Kidney (tissue), 22 donors: ENCODE measurements at regions of chr2 and their contacts with region 1.

Region 1: DNA sequence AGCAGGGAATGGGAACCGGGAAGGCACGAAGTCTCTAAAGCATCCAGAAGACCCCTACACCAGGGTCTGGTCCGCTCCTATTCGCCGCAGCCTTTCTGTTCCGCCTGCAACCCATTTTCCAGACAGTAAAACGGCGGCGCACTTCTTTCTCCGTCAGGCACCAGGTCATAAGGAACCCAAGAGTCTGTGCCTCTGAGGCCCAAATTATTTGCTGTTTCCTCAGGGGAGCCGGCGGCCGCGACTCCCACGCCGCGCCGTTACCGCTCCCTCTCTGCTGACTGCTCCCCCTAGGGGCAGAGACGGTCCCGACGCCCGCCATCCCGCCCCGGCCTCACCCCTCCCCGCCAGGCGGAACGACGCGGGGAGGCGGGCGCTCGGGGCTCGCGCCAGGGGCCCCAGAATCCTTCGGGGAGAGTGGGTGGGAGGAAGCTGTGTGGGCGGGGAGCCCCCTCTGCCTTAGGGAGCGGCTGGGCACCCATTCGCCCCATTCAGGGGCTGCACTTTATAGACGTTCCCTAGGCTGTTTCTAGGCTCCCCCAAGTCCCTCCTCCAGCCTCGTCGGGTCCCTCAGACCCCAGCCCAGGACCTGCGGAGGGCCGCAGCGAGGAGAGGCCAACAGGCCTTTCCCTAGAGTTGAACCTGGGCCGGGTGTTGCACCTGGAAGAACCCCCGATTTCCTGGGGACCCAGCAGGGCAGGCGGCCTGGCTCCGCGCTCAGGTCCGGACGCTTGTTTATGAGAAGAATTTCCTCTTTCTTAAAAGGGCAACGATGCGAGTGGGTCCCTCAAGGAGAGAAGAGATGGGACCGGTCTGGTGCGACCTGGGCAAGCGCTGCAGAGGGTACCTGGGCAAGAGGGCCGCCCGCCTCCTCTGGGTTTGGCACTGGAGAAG is 3.6 kb upstream of the CTDSP1 start:
- DNase-seq: peak; percentile 97 to 99 (median 98)
- H3K4me3 ChIP-seq: peak overlapping the region; percentile 79 to 97 (median 89)
- H3K27ac ChIP-seq: peak overlapping the region; percentile 99
- H3K4me1 ChIP-seq: peaks cover 0 to 14% (median 7%) of the 10 kb centered on the region in 3 donors
- H3K27me3 ChIP-seq: no peaks in the 10 kb centered on the region
- CTCF ChIP-seq: peak; percentile 78

Region 2: GRCh38 chr2:218257390-218257981 is 138.6 kb before region 1 on chr2:
- intact Hi-C with region 1: no loop called
- DNase-seq: peak in 1 of 5 donors; percentile 61
- H3K4me3 ChIP-seq: peak overlapping the region in 1 of 3 donors; percentile 60
- H3K27ac ChIP-seq: no peak overlapping the region
- H3K4me1 ChIP-seq: peaks cover 0 to 28% (median 15%) of the 10 kb centered on the region in 3 donors
- H3K27me3 ChIP-seq: no peaks in the 10 kb centered on the region
- CTCF ChIP-seq: peak; percentile 50

Region 3: DNA sequence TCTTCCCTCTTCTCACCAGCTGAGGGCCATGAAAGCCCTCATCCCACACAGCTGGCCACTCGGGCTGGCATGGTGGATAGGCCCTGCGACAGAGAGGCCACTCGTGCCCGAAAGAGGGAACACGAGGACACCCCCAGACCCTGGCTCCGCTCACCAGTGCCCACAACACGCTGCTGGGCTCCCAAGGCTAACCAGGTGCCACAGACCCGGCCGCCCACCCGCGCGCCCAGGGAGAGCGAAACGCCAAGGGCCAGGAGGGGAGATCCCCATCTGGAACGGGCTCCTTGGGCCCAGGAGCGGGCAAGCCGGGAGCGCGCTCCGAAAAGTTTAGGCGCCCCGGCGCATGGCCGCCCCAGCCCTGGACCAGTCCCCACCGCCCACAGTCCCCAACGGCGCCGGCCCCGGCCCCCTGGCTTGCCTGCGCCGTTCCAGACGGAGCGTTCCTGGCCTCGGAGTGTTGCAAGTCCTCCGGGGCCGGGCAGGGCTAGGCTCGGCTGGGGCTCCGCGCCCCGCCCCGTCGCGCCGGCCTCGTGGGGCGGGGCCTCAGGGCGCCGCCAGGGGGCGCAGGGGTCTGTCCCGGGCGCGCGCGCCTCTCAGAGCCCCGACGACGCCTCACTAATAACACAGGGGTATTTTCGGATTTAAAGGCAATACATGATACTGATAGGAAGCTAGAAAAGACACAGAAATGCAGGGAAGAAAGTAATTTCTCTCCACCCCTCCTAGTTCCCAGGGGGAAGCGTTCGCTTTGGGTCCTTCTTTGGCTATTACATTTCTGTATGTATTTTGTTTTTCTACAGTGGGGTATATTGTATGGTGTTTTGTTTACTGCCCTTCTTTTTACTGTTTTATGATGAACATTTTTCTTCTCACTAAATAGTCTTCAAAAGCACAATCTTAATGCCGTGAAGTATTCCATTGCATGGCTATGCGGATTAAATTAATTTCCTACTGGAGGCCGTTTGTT is 103.7 kb before region 1 on chr2 and contains the start of gene TMBIM1:
- intact Hi-C with region 1: loop called (anchors 10 kb)
- DNase-seq: peak; percentile 82 to 94 (median 86)
- H3K4me3 ChIP-seq: peak within 1 kb of the TSS; percentile 66 to 86 (median 73)
- H3K27ac ChIP-seq: peak within 1 kb of the TSS; percentile 98
- H3K4me1 ChIP-seq: peaks cover 9 to 43% (median 40%) of the 10 kb centered on the region in 3 donors
- H3K27me3 ChIP-seq: no peaks in the 10 kb centered on the region
- CTCF ChIP-seq: peak; percentile 67
- total RNA-seq, gene TMBIM1: 217 TPM

Region 4: GRCh38 chr2:218466016-218466521 is 70.0 kb after region 1 on chr2:
- intact Hi-C with region 1: no loop called
- DNase-seq: peak in 2 of 5 donors; percentile 31 to 52
- H3K4me3 ChIP-seq: no peak overlapping the region
- H3K27ac ChIP-seq: no peak overlapping the region
- H3K4me1 ChIP-seq: no peaks in the 10 kb centered on the region
- H3K27me3 ChIP-seq: no peaks in the 10 kb centered on the region
- CTCF ChIP-seq: peak; percentile 48

Region 5: GRCh38 chr2:218518876-218519275 is 122.8 kb after region 1 on chr2:
- intact Hi-C with region 1: no loop called
- DNase-seq: no peak
- H3K4me3 ChIP-seq: no peak overlapping the region
- H3K27ac ChIP-seq: no peak overlapping the region
- H3K4me1 ChIP-seq: no peaks in the 10 kb centered on the region
- H3K27me3 ChIP-seq: no peaks in the 10 kb centered on the region
- CTCF ChIP-seq: no peak